ENCODE measurements at regions of chr1 and their contacts with region 1.

Region 1: DNA sequence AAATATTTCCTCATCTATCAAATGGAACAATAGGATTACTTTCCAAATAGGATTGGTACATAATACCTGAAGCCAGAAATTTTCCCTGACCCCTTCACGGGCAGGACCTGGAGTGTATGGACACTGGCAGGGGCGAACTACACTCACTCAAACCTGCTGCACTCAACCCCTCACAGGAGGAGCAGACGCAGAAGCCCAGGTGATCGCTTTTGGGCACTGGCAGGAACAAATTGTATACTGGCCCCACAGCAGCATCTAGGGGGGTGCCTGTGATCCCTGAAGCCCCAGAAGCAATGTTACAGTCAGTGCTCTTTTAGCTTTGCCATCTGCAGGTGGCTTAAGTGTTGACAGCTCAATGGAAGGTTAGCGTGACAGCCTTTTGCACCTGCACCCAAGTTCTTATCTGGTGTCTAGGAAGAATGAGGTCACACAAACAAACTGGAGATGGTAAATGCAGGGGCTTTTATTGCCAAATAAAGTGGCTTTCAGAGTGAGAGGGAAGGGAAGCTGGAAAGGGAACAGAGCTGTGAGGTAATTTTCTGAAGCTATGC is 199.2 kb upstream of the NEGR1 start:
- DNase-seq: no peak
- ATAC-seq: no peak
- H3K4me3 ChIP-seq: no peak overlapping the region
- H3K27ac ChIP-seq: no peak overlapping the region
- H3K4me1 ChIP-seq: no peaks in the 10 kb centered on the region
- H3K27me3 ChIP-seq: no peaks in the 10 kb centered on the region
- CTCF ChIP-seq: no peak

Region 2: GRCh38 chr1:70641868-70642267 is 1839.6 kb before region 1 on chr1:
- CTCF ChIA-PET with region 1: no interaction called
- POLR2A ChIA-PET with region 1: interaction called, 11 read pairs
- intact Hi-C with region 1: no loop called
- DNase-seq: no peak
- ATAC-seq: no peak
- H3K4me3 ChIP-seq: no peak overlapping the region
- H3K27ac ChIP-seq: no peak overlapping the region
- H3K4me1 ChIP-seq: no peaks in the 10 kb centered on the region
- H3K27me3 ChIP-seq: 0 out of 2 replicates have a peak, but pooled peaks cover 6% of the 10 kb centered on the region
- CTCF ChIP-seq: no peak

Measured in PC-3 (cell line).